Naive thymus-derived CD4-positive, alpha-beta T cell (primary cell): ENCODE measurements at regions of chr4 and their contacts with region 1.

Region 1: DNA sequence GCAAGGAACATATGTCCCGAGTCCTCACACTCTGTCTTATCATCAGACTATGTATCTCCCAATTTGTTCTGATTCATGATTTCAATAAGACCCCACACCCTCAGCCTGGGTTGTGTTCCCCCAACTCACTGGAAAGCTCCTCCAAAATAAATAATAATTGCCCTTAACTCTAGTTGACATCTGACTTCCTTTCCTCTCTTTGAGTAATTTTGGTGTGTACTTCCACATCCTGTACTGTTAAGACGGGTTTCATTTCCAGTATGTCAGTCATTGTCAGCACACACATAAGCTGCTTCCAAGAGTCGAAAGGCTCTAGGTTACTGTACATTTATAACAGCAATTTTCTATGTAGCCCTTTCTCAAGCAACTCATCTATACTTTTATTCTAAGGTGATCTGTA is 52.2 kb upstream of the C1QTNF7 start:
- DNase-seq: peak in 6 of 9 donors; percentile 7 to 44 (median 40)
- ATAC-seq: peak; percentile 63
- H3K4me3 ChIP-seq: no peak overlapping the region
- H3K4me3 Mint-ChIP-seq: peak overlapping the region in 7 of 10 donors; percentile 0 to 59 (median 20)
- H3K27ac ChIP-seq: no peak overlapping the region
- H3K27ac Mint-ChIP-seq: peak overlapping the region in 7 of 9 donors; percentile 11 to 95 (median 81)
- H3K4me1 ChIP-seq: peaks cover 0 to 13% of the 10 kb centered on the region in 2 donors
- H3K4me1 Mint-ChIP-seq: peaks cover 16 to 52% (median 43%) of the 10 kb centered on the region in 7 donors
- H3K27me3 ChIP-seq: no peaks in the 10 kb centered on the region
- H3K27me3 Mint-ChIP-seq: peaks cover 0 to 4% (median 0%) of the 10 kb centered on the region in 5 donors

Region 2: DNA sequence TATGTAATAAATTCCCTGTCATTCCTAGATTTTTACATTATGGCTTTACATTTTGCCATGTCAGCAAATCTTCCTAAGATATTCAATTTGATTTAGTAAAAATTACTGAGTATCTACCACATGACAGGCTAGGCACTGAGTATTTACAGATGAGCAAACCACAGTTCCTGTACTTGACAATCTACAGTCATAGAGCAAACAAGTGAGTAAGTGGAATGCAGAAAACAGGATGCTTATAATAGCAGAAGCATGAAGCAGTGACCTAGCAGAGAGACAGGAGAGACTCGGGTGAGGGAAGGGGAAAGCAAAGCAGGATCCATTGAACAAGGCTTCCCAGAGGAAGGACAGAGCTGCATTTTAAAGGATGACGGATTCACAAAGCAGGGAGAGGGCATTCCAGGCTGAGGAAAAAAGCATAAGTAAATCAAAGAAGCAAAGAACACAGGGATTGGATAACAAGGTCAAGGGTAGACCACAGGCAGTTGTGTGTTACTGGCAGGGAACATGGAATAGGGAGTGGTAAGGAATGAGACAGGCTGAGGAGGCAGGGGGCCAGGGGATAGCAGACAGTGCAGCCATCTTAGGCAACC is 72.5 kb before region 1 on chr4:
- CTCF ChIA-PET with region 1: no interaction called
- POLR2A ChIA-PET with region 1: no interaction called
- intact Hi-C with region 1: no loop called
- DNase-seq: no peak
- ATAC-seq: no peak
- H3K4me3 ChIP-seq: no peak overlapping the region
- H3K4me3 Mint-ChIP-seq: no peak overlapping the region
- H3K27ac ChIP-seq: no peak overlapping the region
- H3K27ac Mint-ChIP-seq: peak overlapping the region in 1 of 9 donors; percentile 69
- H3K4me1 ChIP-seq: no peaks in the 10 kb centered on the region
- H3K4me1 Mint-ChIP-seq: peaks cover 0 to 2% (median 0%) of the 10 kb centered on the region in 7 donors
- H3K27me3 ChIP-seq: no peaks in the 10 kb centered on the region
- H3K27me3 Mint-ChIP-seq: peaks cover 0 to 6% (median 0%) of the 10 kb centered on the region in 5 donors

Region 3: GRCh38 chr4:15354371-15355297 is 21.0 kb before region 1 on chr4:
- CTCF ChIA-PET with region 1: no interaction called
- POLR2A ChIA-PET with region 1: no interaction called
- intact Hi-C with region 1: no loop called
- DNase-seq: no peak
- ATAC-seq: no peak
- H3K4me3 ChIP-seq: no peak overlapping the region
- H3K4me3 Mint-ChIP-seq: no peak overlapping the region
- H3K27ac ChIP-seq: no peak overlapping the region
- H3K27ac Mint-ChIP-seq: peak overlapping the region in 1 of 9 donors; percentile 28
- H3K4me1 ChIP-seq: no peaks in the 10 kb centered on the region
- H3K4me1 Mint-ChIP-seq: peaks cover 0 to 7% (median 7%) of the 10 kb centered on the region in 7 donors
- H3K27me3 ChIP-seq: no peaks in the 10 kb centered on the region
- H3K27me3 Mint-ChIP-seq: peaks cover 0 to 8% (median 0%) of the 10 kb centered on the region in 5 donors

Region 4: GRCh38 chr4:15410750-15411149 is 35.1 kb after region 1 on chr4:
- CTCF ChIA-PET with region 1: no interaction called
- POLR2A ChIA-PET with region 1: no interaction called
- intact Hi-C with region 1: loop called in 1 of 2 experiments (anchors 5 kb)
- DNase-seq: peak in 6 of 9 donors; percentile 30 to 56 (median 42)
- ATAC-seq: peak; percentile 71
- H3K4me3 ChIP-seq: peak overlapping the region; percentile 41
- H3K4me3 Mint-ChIP-seq: peak overlapping the region; percentile 43 to 82 (median 70)
- H3K27ac ChIP-seq: peak overlapping the region; percentile 41
- H3K27ac Mint-ChIP-seq: peak overlapping the region in 8 of 9 donors; percentile 73 to 93 (median 85)
- H3K4me1 ChIP-seq: peaks cover 12 to 46% of the 10 kb centered on the region in 2 donors
- H3K4me1 Mint-ChIP-seq: peaks cover 25 to 68% (median 63%) of the 10 kb centered on the region in 7 donors
- H3K27me3 ChIP-seq: no peaks in the 10 kb centered on the region
- H3K27me3 Mint-ChIP-seq: peaks cover 0 to 3% (median 0%) of the 10 kb centered on the region in 5 donors